AG04449 (cell line): ENCODE measurements at regions of chr10 and their contacts with region 1.

Region 1: DNA sequence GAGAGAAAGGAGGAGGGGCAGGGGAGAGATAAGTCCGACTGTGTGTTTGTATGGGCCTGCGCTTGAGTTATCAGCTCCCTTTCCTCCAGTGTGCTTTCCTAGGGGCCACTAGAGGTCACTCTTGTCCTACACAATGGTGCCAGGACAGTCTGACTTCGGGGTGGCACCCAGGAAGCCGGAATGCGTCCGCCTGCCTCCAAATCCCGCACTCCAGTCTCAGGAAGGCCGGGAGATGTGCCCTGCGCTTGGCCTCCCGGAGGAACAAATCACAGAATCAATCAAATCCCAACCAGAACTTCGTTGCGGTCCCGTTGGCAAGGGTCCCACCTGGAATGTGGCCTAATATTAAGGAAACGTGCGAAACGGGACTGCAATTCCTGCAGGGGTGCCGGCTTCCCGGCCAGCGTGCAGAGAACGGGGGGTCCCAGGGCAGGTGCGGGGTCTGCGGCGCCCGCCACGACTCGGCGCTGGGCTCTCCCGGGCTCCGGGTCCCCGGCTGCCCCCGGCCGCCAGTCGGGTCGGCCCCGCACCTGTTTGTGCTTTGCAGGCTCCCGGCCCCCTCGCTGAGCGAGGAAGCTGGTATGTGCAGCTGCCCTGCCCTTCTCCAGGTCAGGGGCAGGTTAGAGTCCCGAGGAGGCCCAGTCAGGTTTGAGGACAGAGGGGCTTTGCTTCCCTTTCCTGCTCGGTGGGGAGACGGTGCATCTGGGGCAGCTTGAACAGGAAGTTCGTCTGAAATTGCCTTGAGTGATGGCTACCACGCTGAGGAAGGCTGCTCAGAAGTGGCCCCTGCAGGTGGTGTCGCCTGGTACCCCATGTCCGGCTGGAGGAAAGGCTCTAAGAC is 21.0 kb upstream of the HPS1 start:
- DNase-seq: no peak
- H3K4me3 ChIP-seq: peak overlapping the region; percentile 58
- CTCF ChIP-seq: peak; percentile 89

Region 2: GRCh38 chr10:98478430-98479222 is 10.9 kb after region 1 on chr10:
- CTCF ChIA-PET with region 1: interaction called, 41 read pairs
- POLR2A ChIA-PET with region 1: no interaction called
- DNase-seq: no peak
- H3K4me3 ChIP-seq: no peak overlapping the region
- CTCF ChIP-seq: no peak

Region 3: GRCh38 chr10:98664331-98665042 is 196.8 kb after region 1 on chr10:
- CTCF ChIA-PET with region 1: interaction called, 46 read pairs
- POLR2A ChIA-PET with region 1: no interaction called
- DNase-seq: no peak
- H3K4me3 ChIP-seq: no peak overlapping the region
- CTCF ChIP-seq: peak; percentile 31

Region 4: DNA sequence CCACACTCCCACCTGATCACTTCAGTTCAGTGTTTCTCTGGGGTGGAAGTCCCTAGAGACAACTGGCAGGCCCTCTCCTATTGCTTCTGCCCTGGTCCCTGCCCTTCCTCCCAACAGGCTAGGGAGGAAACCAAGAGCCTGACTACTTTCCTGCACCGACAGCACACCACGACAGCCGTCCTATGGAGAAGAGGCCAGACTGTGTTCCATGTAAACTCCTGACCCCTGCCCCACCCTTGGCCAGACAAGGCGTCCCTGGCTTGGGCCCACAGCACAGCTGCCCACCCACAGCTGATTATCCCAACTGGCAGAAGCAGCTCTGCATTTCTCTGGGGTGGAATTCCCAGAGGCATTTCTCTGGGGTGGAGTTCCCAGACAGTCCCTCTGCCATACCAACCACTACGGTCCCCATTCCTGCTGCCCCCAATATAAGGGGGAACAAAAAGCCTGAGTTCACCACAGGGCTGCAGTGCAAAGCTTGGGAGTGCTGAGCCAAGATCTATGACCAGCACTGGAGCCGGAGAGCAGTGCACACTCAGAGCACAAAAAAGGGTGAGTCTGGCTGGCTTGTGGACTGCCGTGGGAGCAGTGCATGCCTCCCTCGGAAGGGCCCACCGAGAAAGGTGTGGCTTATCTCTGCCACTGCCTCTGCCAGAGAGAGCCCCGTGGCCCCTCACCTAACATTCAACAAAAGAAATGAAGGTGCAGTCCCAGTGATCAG is 574.5 kb after region 1 on chr10:
- CTCF ChIA-PET with region 1: interaction called, 11 read pairs
- POLR2A ChIA-PET with region 1: no interaction called
- DNase-seq: no peak
- H3K4me3 ChIP-seq: no peak overlapping the region
- CTCF ChIP-seq: no peak

Region 5: GRCh38 chr10:99172130-99172738 is 704.5 kb after region 1 on chr10:
- CTCF ChIA-PET with region 1: interaction called, 29 read pairs
- POLR2A ChIA-PET with region 1: no interaction called
- DNase-seq: no peak
- H3K4me3 ChIP-seq: no peak overlapping the region
- CTCF ChIP-seq: peak; percentile 40

Region 6: DNA sequence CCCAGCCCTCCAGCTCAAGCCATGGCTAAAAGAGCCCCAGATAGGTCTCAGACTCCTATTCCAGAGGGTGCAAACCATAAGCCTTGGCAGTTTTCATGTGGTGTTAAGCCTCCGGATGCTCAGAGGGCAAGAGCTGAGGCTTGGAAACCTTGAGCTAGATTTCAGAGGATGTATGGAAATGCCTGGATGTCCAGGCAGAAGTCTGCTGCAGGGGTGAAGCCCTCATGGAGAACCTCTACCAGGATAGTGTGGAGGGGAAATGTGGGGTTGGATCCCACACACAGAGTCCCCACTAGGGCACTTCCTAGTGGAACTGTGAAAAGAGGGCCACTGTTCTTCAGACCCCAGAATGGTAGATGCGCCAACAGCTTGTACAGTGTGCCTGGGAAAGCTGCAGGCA is 781.1 kb after region 1 on chr10:
- CTCF ChIA-PET with region 1: interaction called, 28 read pairs
- POLR2A ChIA-PET with region 1: no interaction called
- DNase-seq: no peak
- H3K4me3 ChIP-seq: no peak overlapping the region
- CTCF ChIP-seq: no peak